SK-N-SH (cell line): ENCODE measurements at regions of chr22 and their contacts with region 1.

Region 1: DNA sequence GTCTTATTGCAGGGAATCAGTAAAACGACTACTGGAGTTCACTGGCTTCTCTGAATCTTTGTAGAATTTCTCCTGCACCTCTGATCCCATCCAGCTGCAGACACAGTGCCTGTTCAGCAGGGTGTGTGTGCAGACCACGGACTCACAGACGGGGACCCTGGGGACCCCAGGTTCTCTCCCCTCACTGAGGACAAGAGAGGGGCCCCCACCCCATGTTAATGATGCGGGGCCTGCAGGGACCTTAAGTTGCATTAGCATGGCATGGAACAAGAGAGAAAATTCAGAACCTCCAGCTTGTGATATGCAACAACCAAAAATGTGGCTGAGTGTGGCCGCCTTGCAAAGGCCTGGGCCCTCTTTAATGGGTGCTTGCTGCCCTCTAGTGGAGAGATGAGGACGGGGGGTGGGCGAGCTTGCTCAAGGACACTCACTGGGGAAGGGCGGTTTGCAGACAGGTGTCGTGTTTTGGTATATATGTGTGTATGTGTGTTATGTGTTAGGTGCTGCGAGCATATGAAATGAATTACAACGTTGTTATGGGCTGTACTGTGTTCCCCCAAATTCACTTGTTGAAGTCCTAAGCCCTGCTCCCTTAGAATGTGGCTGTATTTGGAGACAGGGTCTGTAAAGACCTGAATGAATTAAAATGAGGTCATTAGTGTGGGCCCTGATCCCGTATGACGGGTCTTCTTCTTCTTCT is 84.4 kb upstream of the SEPTIN5 start:
- DNase-seq: peak; percentile 95
- H3K4me3 ChIP-seq: peak overlapping the region in 1 of 2 experiments; percentile 57; a peak in 1 of 4 replicates
- H3K27ac ChIP-seq: no peak overlapping the region
- H3K4me1 ChIP-seq: no peaks in the 10 kb centered on the region
- H3K27me3 ChIP-seq: no peaks in the 10 kb centered on the region
- CTCF ChIP-seq: peak; percentile 97
- EP300 ChIP-seq: no peak
- RAD21 ChIP-seq: peak; percentile 98

Region 2: GRCh38 chr22:19295733-19296132 is 334.1 kb before region 1 on chr22:
- CTCF ChIA-PET with region 1: interaction called, 37 read pairs
- POLR2A ChIA-PET with region 1: no interaction called
- DNase-seq: no peak
- H3K4me3 ChIP-seq: no peak overlapping the region
- H3K27ac ChIP-seq: no peak overlapping the region
- H3K4me1 ChIP-seq: peaks cover 0 to 9% of the 10 kb centered on the region in 2 experiments; a peak in 2 of 4 replicates
- H3K27me3 ChIP-seq: no peaks in the 10 kb centered on the region
- CTCF ChIP-seq: no peak
- EP300 ChIP-seq: no peak
- RAD21 ChIP-seq: no peak

Region 3: GRCh38 chr22:19479357-19480172 is 150.3 kb before region 1 on chr22 and contains the start of gene CDC45:
- CTCF ChIA-PET with region 1: interaction called, 17 read pairs
- POLR2A ChIA-PET with region 1: no interaction called
- DNase-seq: peak; percentile 95
- H3K4me3 ChIP-seq: peak within 1 kb of the TSS; percentile 94 to 95
- H3K27ac ChIP-seq: peak within 1 kb of the TSS; percentile 95 to 99
- H3K4me1 ChIP-seq: peaks cover 5 to 16% of the 10 kb centered on the region in 2 experiments; a peak in 3 of 4 replicates
- H3K27me3 ChIP-seq: no peaks in the 10 kb centered on the region
- CTCF ChIP-seq: no peak
- EP300 ChIP-seq: no peak
- RAD21 ChIP-seq: no peak
- polyA plus RNA-seq, gene CDC45: 23.6 and 26.4 TPM in 2 replicates

Region 4: GRCh38 chr22:19503869-19504268 is 126.0 kb before region 1 on chr22:
- CTCF ChIA-PET with region 1: interaction called, 20 read pairs
- POLR2A ChIA-PET with region 1: no interaction called
- DNase-seq: no peak
- H3K4me3 ChIP-seq: no peak overlapping the region
- H3K27ac ChIP-seq: no peak overlapping the region
- H3K4me1 ChIP-seq: no peaks in the 10 kb centered on the region
- H3K27me3 ChIP-seq: no peaks in the 10 kb centered on the region
- CTCF ChIP-seq: no peak
- EP300 ChIP-seq: no peak
- RAD21 ChIP-seq: no peak

Region 5: DNA sequence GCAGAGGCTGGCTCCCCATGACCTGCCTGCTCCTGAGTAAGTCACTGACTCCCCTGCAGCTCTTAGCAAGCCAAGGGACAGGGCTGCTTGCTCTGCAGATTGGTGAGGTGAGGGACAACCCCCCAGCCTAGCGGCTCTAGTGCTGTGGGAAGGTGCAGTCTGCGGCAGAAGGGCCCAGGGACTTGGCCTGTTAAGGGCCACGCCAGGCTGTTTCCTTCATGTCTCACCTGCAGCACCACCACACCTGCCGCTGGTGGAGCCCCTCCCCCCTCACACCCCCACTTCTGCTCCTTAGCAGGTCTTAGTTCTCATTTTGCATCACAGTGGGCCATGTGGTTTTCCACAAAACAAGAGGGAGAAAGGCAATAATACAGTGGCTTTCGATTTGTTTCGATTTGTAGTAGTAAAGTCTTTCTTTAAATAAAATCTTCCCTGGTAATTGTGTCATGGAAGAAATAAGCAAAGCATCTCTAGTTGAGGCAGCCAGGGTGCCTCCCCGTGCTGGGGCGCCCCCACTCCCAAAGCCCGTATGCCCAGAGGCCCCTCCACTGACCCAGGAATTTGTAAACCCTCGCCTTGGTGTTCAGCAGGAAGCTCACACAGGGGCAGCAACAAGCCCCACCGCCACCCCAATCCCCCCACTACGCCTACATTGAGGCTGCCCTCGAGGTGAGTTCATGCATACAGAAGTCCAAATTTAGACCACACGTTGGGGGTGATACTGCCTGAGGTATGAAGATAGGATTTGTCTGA is 19.2 kb before region 1 on chr22:
- CTCF ChIA-PET with region 1: interaction called, 11 read pairs
- POLR2A ChIA-PET with region 1: no interaction called
- DNase-seq: no peak
- H3K4me3 ChIP-seq: no peak overlapping the region
- H3K27ac ChIP-seq: no peak overlapping the region
- H3K4me1 ChIP-seq: no peaks in the 10 kb centered on the region
- H3K27me3 ChIP-seq: peaks cover 28% of the 10 kb centered on the region
- CTCF ChIP-seq: no peak
- EP300 ChIP-seq: no peak
- RAD21 ChIP-seq: no peak

Region 6: DNA sequence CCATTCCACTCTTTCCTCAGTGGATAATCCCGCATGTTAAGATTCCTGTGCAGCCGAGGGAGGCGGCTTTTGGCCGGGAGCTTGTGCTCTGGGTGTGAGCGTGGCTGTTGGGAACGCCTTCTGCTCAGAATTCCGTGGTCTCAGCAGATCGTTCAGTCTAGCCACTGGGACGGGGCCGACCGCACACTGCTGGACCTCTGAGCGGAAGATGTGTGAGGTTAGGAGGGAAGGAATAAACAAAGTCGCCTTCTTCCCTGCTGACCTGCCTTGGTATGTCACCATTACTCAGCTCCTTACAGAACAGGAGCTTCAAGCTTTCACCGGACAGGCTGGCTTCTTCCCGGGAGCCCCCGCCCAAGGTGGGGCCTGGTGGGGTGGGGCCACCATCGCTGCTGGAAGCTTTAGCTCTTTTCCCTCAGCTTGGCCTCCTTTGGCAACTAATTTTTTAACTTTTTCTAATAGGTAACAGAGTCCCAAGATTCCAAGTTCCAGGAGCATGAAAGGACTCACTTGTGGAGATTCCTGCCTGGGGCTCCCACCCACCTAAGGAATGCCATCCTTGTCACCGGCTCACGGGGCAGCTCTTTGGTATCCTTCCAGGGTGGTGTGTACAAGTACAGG is 62.0 kb after region 1 on chr22:
- CTCF ChIA-PET with region 1: interaction called, 18 read pairs
- POLR2A ChIA-PET with region 1: interaction called, 3 read pairs
- DNase-seq: no peak
- H3K4me3 ChIP-seq: no peak overlapping the region
- H3K27ac ChIP-seq: no peak overlapping the region
- H3K4me1 ChIP-seq: peaks cover 0 to 6% of the 10 kb centered on the region in 2 experiments; a peak in 1 of 4 replicates
- H3K27me3 ChIP-seq: no peaks in the 10 kb centered on the region
- CTCF ChIP-seq: no peak
- EP300 ChIP-seq: no peak
- RAD21 ChIP-seq: no peak

Region 7: DNA sequence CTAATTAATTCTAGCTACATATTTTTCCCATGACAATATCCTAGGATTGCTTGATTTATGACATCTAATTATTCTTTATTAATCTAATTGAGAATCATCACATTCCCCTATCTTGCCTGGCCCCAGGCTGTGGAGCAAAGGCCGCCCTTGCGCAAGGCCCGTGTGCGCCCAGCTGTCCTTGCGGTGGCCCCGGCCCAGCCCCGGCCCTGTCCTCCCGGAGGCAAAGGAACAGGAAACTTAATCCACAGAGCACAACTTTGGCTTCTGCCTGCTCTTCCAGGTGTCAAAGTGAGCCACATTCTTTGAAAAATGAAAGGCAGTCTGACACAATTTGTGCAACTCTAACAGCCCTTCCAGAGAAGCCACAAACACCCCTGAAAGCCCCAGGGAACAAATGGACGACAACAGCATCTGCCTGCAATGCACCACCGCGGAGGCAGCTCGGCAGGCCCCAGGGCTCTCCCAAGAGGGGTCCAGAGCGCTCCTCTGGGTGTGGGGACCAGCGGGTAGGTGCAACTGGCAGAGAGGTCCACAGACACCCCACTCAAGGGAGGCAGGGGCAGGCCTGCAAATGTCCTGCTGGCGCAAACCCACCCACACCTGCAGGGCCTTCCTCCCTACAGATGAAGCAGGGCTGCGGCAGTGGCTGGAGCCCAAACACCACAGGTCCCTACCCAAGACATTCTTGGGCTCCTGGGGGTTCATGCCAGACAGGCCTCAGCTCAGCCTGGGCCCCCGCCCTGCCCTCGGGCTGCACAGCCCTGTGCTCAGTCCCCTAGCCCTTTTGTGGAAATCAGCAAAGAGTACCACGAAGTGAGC is 194.5 kb after region 1 on chr22:
- CTCF ChIA-PET with region 1: no interaction called
- POLR2A ChIA-PET with region 1: no interaction called
- DNase-seq: no peak
- H3K4me3 ChIP-seq: no peak overlapping the region
- H3K27ac ChIP-seq: no peak overlapping the region; a peak in 1 of 4 replicates
- H3K4me1 ChIP-seq: peaks cover 0 to 32% of the 10 kb centered on the region in 2 experiments; a peak in 1 of 4 replicates
- H3K27me3 ChIP-seq: no peaks in the 10 kb centered on the region
- CTCF ChIP-seq: no peak
- EP300 ChIP-seq: no peak
- RAD21 ChIP-seq: no peak